SK-N-SH (cell line): ENCODE measurements at regions of chr17 and their contacts with region 1.

Region 1: DNA sequence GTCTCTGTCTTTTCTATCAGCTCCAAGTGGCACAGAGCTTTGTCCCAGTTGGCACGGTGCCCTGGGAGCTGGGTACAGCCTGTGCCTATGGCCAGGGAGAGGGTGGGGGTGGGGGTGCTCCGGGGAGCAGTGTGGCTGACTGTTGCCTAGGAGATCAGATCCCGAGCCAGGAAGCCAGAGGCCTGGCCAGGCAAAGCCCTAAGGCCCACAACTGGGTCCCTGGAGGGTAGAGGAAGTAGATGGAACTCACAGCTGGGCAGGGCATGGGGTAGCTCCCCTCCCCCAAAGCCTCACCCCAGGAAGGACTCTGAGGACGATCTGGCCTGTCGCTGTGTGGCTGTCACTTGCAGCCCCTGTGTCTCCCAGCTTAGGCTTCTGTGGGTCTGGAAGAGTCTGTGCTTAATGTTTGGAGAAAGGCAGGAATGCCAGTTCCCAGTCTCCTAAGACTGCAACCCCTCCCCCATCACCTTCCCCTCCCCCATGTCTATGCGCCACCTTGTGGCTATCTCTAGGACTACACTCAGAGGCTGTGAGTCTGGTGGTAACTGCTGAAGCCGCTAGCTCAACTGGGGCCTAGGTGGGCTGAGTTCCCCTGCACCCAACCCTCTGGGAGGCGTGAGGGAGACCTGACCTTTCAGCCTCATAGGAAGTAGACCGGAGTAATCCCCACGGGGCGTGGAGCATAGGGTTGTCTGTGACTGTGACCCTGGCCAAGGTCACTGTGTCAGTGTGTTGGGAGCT is 12.6 kb downstream of the THRA start:
- DNase-seq: peak; percentile 83
- H3K4me3 ChIP-seq: no peak overlapping the region; a peak in 1 of 4 replicates
- H3K27ac ChIP-seq: peak overlapping the region; percentile 54 to 76; a peak in 3 of 4 replicates
- H3K4me1 ChIP-seq: peaks cover 32 to 59% of the 10 kb centered on the region in 2 experiments; a peak in 3 of 4 replicates
- H3K27me3 ChIP-seq: no peaks in the 10 kb centered on the region
- CTCF ChIP-seq: peak; percentile 88
- EP300 ChIP-seq: peak in 1 of 2 experiments; percentile 12; a peak in 1 of 4 replicates
- RAD21 ChIP-seq: peak; percentile 69

Region 2: GRCh38 chr17:40021451-40021971 is 53.9 kb before region 1 on chr17:
- CTCF ChIA-PET with region 1: interaction called, 42 read pairs
- POLR2A ChIA-PET with region 1: no interaction called
- DNase-seq: no peak
- H3K4me3 ChIP-seq: no peak overlapping the region
- H3K27ac ChIP-seq: peak overlapping the region in 1 of 2 experiments; percentile 54; a peak in 2 of 4 replicates
- H3K4me1 ChIP-seq: peaks cover 0 to 9% of the 10 kb centered on the region in 2 experiments; a peak in 2 of 4 replicates
- H3K27me3 ChIP-seq: no peaks in the 10 kb centered on the region
- CTCF ChIP-seq: no peak
- EP300 ChIP-seq: no peak
- RAD21 ChIP-seq: no peak

Region 3: GRCh38 chr17:40038882-40039513 is 36.4 kb before region 1 on chr17:
- CTCF ChIA-PET with region 1: interaction called, 67 read pairs
- POLR2A ChIA-PET with region 1: interaction called, 5 read pairs
- DNase-seq: peak; percentile 80
- H3K4me3 ChIP-seq: no peak overlapping the region
- H3K27ac ChIP-seq: peak overlapping the region; percentile 34 to 64
- H3K4me1 ChIP-seq: peaks cover 0 to 6% of the 10 kb centered on the region in 2 experiments; a peak in 1 of 4 replicates
- H3K27me3 ChIP-seq: no peaks in the 10 kb centered on the region
- CTCF ChIP-seq: peak; percentile 83
- EP300 ChIP-seq: no peak
- RAD21 ChIP-seq: peak; percentile 64

Region 4: GRCh38 chr17:40062329-40063186 is 12.8 kb before region 1 on chr17 and contains the start of gene THRA:
- CTCF ChIA-PET with region 1: interaction called, 160 read pairs
- POLR2A ChIA-PET with region 1: interaction called, 8 read pairs
- DNase-seq: peak; percentile 95
- H3K4me3 ChIP-seq: peak within 1 kb of the TSS; percentile 77 to 94
- H3K27ac ChIP-seq: peak within 1 kb of the TSS in 1 of 2 experiments; percentile 81; a peak in 2 of 4 replicates
- H3K4me1 ChIP-seq: peaks cover 13 to 32% of the 10 kb centered on the region in 2 experiments; a peak in 3 of 4 replicates
- H3K27me3 ChIP-seq: no peaks in the 10 kb centered on the region
- CTCF ChIP-seq: no peak
- EP300 ChIP-seq: no peak
- RAD21 ChIP-seq: peak; percentile 38; the same call in 1 of the 2 replicates
- polyA plus RNA-seq, gene THRA: 20.1 and 23.1 TPM in 2 replicates

Region 5: GRCh38 chr17:40092581-40092980 is 17.2 kb after region 1 on chr17:
- CTCF ChIA-PET with region 1: interaction called, 47 read pairs
- POLR2A ChIA-PET with region 1: no interaction called
- DNase-seq: no peak
- H3K4me3 ChIP-seq: no peak overlapping the region
- H3K27ac ChIP-seq: no peak overlapping the region
- H3K4me1 ChIP-seq: no peaks in the 10 kb centered on the region; a peak in 1 of 4 replicates
- H3K27me3 ChIP-seq: no peaks in the 10 kb centered on the region
- CTCF ChIP-seq: no peak
- EP300 ChIP-seq: no peak
- RAD21 ChIP-seq: no peak

Region 6: DNA sequence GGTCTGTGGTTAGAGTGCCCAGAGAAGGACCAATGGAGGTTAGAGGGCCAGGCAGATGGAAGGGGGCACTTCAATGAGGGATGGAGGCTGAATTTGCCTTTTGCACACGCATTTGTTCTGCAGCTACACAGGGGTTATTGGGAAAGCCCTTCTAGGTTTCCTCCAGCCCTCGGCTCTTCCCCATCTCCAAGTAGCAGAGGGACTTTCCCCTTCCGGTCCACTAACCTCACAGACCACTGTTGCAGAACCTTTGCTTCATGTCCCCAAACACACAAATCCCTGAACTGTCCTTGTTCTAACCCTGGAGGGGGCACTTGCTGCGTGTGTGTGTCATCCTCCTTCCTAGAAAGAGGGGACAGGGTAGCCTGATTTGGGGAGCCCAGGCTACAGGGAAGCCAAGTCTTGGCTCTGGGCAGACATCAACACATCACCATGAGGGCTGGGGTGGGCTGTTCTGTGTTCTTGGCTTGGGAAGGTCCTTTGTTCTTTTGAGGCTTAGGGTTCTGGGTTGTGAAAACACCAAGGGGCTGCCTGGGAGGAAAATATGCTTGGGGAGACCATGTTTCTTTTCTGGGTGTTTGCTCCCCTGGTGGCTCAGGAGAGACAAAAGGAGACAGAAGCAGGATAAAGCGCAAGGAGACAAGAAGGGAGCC is 32.3 kb after region 1 on chr17:
- CTCF ChIA-PET with region 1: interaction called, 100 read pairs
- POLR2A ChIA-PET with region 1: interaction called, 4 read pairs
- DNase-seq: no peak
- H3K4me3 ChIP-seq: no peak overlapping the region
- H3K27ac ChIP-seq: no peak overlapping the region
- H3K4me1 ChIP-seq: peaks cover 28 to 29% of the 10 kb centered on the region in 2 experiments
- H3K27me3 ChIP-seq: no peaks in the 10 kb centered on the region
- CTCF ChIP-seq: no peak
- EP300 ChIP-seq: no peak
- RAD21 ChIP-seq: no peak